GM13977 (cell line): ENCODE measurements at regions of chr4 and their contacts with region 1.

Region 1: DNA sequence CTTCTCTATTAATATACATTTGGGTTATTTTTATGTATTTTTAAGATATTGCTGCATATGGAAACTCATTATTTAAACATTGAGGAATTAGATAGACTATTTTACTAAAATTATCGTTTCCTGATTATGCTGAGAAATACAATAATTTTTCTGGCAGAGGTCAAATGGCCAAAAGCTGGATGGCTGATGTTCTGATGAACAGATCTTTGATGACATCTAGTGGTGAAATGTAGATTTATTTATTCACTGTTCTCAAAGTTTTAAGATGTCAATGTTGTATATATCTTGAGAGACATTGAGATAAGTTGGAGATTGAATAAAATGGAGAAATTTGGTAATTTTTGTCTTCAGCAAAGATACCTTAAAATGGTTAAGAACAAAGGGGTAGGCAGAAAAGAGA is 96.2 kb downstream of the UGT8 start:
- DNase-seq: no peak
- CTCF ChIP-seq: peak; percentile 54

Region 2: GRCh38 chr4:113952452-113953029 is 742.2 kb before region 1 on chr4:
- in situ Hi-C with region 1: loop called (anchors 25 kb)
- DNase-seq: peak; percentile 15
- CTCF ChIP-seq: peak; percentile 74

Region 3: GRCh38 chr4:114399105-114399504 is 295.7 kb before region 1 on chr4:
- in situ Hi-C with region 1: loop called (anchors 10 kb)
- DNase-seq: no peak
- CTCF ChIP-seq: no peak

Region 4: GRCh38 chr4:115054839-115055238 is 360.1 kb after region 1 on chr4:
- in situ Hi-C with region 1: no loop called
- DNase-seq: no peak
- CTCF ChIP-seq: no peak